MCF 10A (cell line): ENCODE measurements at regions of chr16 and their contacts with region 1.

Region 1: DNA sequence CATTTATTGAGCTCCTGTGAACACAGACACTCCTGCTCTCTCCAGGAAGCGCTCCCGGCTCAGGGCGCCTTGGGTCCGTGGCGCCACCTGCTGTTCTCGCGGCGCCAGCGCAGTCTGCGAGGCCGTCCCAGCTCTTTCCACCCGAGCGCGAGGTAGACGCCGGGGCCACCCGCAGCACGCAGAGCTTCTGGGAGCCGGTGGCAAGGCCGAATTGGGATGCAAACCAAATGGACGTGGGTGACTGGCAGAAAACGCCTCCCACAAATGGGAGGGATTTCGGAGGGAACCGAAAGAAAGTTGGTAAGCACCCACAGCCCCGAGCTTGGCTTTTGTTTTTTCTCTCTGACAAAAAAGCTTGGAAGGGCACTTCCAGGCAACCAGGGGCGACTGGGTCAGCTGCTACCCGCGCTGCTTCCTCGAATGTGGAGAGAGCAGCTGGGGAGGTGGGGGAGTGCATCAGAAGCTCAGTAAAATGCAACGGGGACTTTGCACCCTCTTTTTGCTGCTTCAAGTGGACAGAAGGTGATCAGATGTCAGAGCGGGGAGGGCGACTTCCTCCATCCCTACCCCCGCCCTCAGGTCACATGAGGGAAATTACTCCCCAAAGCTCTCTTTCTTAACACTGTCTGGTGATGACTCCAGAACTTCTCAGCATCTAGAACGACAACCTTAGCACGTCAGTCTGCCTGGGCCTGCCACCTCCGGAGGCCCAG is 13.5 kb upstream of the N4BP1 start:
- DNase-seq: peak; percentile 79
- H3K4me3 Mint-ChIP-seq: peak overlapping the region; percentile 71
- H3K27ac Mint-ChIP-seq: peak overlapping the region; percentile 77
- H3K4me1 Mint-ChIP-seq: peaks cover 11% of the 10 kb centered on the region
- H3K27me3 Mint-ChIP-seq: no peaks in the 10 kb centered on the region
- CTCF ChIP-seq: peak; percentile 96

Region 2: DNA sequence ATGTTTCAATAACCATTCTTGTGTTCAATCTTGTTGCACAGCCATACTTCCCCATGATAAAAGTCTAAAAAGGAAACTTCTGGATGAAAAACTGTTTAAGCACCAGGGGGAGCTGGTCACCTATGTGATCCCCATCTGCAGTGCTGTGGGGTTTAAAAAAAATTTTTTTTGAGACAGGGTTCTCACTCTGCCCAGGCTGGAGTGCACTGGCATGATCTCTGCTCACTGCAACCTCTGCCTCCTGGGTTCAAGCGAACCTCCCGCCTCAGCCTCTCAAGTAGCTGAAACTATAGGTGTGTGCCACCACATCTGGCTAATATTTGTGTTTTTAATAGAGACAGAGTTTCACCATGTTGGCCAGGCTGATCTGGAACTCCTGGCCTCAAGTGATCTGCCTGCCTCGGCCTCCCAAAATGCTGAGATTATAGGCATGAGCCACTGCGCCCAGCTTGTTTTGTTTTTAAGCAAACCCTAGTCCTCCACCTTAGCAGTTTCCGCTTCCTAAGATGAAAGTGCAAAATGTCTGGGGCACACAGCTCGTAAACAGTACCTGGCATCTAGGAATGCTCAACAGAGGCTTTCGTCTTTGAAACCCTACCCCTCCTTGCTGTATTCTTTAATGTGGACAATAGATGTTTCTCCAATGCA is 1675.4 kb before region 1 on chr16:
- CTCF ChIA-PET with region 1: interaction called, 3 read pairs
- POLR2A ChIA-PET with region 1: no interaction called
- intact Hi-C with region 1: loop called (anchors 5 kb)
- DNase-seq: peak; percentile 57
- H3K4me3 Mint-ChIP-seq: no peak overlapping the region
- H3K27ac Mint-ChIP-seq: no peak overlapping the region
- H3K4me1 Mint-ChIP-seq: no peaks in the 10 kb centered on the region
- H3K27me3 Mint-ChIP-seq: no peaks in the 10 kb centered on the region
- CTCF ChIP-seq: peak; percentile 61

Region 3: DNA sequence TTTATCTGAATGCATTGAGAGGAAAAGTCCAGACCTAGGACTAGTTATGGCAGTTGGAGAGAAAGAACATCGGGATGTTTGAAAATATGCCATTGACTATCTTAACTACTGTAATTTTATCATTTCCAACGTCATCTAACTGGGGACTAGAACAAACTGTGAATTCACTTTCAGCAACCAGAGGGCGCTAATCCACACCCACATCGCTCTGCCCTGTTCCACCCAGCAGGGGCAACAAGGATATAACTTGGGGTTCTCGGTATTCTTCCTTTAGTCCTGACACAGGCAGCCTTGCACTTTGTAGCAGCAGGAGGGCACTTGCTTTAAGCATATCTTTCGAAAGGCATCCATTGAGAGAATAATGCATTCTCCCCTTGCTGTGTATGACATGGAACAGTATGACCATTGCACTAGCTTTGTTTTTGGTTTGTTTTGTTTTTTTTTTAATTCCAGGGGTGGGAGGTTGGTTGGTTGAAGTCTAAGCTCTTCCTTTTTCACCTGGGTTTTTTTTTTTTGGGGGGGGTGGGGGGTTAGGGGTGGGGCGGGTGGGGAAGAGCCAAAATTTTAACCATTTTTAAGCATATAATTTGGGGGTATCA is 269.8 kb before region 1 on chr16:
- CTCF ChIA-PET with region 1: interaction called, 27 read pairs
- POLR2A ChIA-PET with region 1: interaction called, 4 read pairs
- intact Hi-C with region 1: loop called (anchors 1 kb)
- DNase-seq: peak; percentile 74
- H3K4me3 Mint-ChIP-seq: no peak overlapping the region
- H3K27ac Mint-ChIP-seq: peak overlapping the region; percentile 46
- H3K4me1 Mint-ChIP-seq: no peaks in the 10 kb centered on the region
- H3K27me3 Mint-ChIP-seq: no peaks in the 10 kb centered on the region
- CTCF ChIP-seq: peak; percentile 71

Region 4: DNA sequence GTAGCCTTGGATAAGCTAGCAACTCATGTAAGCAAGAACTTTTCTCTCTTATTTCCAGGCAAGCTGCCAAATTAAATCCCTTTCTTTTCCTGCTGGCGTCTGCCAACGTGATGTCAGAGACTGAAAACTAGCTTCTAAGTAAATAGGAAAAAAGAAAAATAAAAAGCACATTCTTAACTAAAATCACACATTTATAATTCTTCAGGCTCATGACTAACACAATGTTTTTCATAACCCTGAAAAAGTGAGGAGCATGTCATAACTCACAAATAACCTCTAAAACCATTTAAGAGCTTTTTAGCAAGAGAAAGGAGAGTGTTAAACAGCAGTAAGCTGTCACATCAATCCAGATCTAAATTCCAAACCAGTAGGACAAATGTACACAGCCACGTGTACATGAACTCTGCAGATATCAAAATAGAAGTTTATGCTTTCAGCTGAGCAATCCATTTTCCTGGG is 123.5 kb before region 1 on chr16:
- CTCF ChIA-PET with region 1: interaction called, 16 read pairs
- POLR2A ChIA-PET with region 1: interaction called, 4 read pairs
- intact Hi-C with region 1: no loop called
- DNase-seq: peak; percentile 87
- H3K4me3 Mint-ChIP-seq: no peak overlapping the region
- H3K27ac Mint-ChIP-seq: peak overlapping the region; percentile 73
- H3K4me1 Mint-ChIP-seq: peaks cover 12% of the 10 kb centered on the region
- H3K27me3 Mint-ChIP-seq: no peaks in the 10 kb centered on the region
- CTCF ChIP-seq: no peak

Region 5: GRCh38 chr16:48534601-48535340 is 88.7 kb before region 1 on chr16:
- CTCF ChIA-PET with region 1: interaction called, 46 read pairs
- POLR2A ChIA-PET with region 1: no interaction called
- intact Hi-C with region 1: no loop called
- DNase-seq: no peak
- H3K4me3 Mint-ChIP-seq: no peak overlapping the region
- H3K27ac Mint-ChIP-seq: no peak overlapping the region
- H3K4me1 Mint-ChIP-seq: no peaks in the 10 kb centered on the region
- H3K27me3 Mint-ChIP-seq: no peaks in the 10 kb centered on the region
- CTCF ChIP-seq: no peak

Region 6: DNA sequence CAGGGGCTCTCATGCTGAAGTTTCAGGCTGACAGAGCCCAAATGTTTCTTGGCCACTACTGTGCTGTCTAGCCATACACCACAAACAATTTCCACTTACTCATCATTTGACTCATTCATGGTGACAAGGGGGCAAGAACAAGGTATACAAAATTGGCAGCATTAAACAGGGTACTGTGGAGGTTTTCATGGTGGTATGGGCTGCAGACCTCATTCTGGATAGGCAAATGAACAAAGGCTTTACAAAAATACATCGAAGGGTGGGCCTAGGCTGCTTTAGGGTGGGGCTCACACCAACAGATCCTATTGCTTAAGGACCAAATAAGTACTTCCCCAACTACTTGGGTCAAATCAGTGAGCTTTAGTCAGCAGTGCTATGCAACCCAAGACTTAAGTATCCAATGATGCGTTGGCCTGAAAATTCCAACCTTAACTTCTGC is 66.5 kb before region 1 on chr16:
- CTCF ChIA-PET with region 1: interaction called, 48 read pairs
- POLR2A ChIA-PET with region 1: interaction called, 4 read pairs
- intact Hi-C with region 1: no loop called
- DNase-seq: peak; percentile 51
- H3K4me3 Mint-ChIP-seq: no peak overlapping the region
- H3K27ac Mint-ChIP-seq: no peak overlapping the region
- H3K4me1 Mint-ChIP-seq: peaks cover 18% of the 10 kb centered on the region
- H3K27me3 Mint-ChIP-seq: no peaks in the 10 kb centered on the region
- CTCF ChIP-seq: no peak

Region 7: GRCh38 chr16:48609652-48610029 is 13.8 kb before region 1 on chr16:
- CTCF ChIA-PET with region 1: interaction called, 48 read pairs
- POLR2A ChIA-PET with region 1: interaction called, 25 read pairs
- intact Hi-C with region 1: no loop called
- DNase-seq: peak; percentile 46
- H3K4me3 Mint-ChIP-seq: no peak overlapping the region
- H3K27ac Mint-ChIP-seq: peak overlapping the region; percentile 100
- H3K4me1 Mint-ChIP-seq: peaks cover 12% of the 10 kb centered on the region
- H3K27me3 Mint-ChIP-seq: no peaks in the 10 kb centered on the region
- CTCF ChIP-seq: no peak

Region 8: DNA sequence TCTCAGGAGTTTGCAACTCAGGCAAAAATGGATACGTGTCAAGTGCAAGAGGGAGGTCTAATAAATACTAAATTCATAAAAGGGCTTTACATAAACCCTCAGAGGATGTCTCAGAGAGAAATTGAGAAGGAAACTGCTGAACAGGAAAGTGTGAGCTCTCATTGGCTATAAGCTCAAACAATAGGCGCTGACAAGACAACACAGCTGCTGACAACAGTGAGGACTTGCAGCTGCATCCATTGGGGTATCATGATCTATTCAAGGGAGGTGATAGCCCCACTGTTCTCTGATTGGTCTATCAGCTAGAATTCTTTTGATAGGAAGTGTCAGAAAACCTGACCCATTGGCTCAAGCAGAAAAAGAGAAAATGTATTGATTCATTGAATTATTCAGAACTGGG is 471.0 kb after region 1 on chr16:
- CTCF ChIA-PET with region 1: no interaction called
- POLR2A ChIA-PET with region 1: no interaction called
- intact Hi-C with region 1: no loop called
- DNase-seq: no peak
- H3K4me3 Mint-ChIP-seq: no peak overlapping the region
- H3K27ac Mint-ChIP-seq: no peak overlapping the region
- H3K4me1 Mint-ChIP-seq: no peaks in the 10 kb centered on the region
- H3K27me3 Mint-ChIP-seq: peaks cover 49% of the 10 kb centered on the region
- CTCF ChIP-seq: no peak